ENCODE measurements at regions of chr5 and their contacts with region 1.

Region 1: GRCh38 chr5:138824924-138825863 is 49.9 kb downstream of the LRRTM2 start:
- DNase-seq: peak; percentile 24 to 44 (median 36)
- H3K4me3 ChIP-seq: no peak overlapping the region
- H3K27ac ChIP-seq: no peak overlapping the region
- H3K4me1 ChIP-seq: peaks cover 0 to 6% (median 0%) of the 10 kb centered on the region in 4 experiments
- H3K27me3 ChIP-seq: no peaks in the 10 kb centered on the region

Region 2: DNA sequence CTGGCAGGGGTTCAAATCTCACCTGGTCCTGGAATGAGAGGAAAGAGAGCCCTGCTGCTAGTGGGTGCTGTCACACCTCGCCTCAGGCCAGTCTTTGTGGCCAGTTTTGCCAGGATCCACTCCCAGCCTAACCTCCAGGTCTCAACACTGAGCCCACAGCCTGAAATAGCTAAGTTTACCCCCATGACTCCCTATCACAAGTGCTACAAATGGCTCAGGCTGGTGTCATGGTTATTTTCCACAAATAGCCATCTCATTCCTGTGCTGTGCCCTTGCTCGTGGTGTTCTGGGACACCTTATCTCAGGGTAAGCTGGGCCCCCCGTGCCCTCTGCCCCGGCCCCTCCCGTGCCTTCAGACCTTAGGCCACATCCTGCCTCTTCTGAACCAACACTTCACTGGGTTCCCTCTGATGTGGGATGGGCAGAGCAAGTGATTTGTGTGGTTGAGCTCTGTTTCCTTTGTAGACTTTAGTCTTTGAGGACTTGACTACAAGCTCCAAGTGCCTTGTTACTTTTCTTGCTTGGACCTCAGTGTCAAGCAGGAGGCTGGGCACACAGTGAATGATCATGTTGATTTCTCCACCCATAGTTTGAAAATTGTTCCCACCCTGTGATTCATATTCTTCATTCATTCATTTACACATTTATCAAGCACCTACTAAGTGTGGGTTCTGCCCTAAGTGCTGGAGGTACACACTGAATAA is 156.7 kb before region 1 on chr5:
- CTCF ChIA-PET with region 1: no interaction called
- POLR2A ChIA-PET with region 1: no interaction called
- DNase-seq: peak in 2 of 3 donors; percentile 62 to 65
- H3K4me3 ChIP-seq: no peak overlapping the region
- H3K27ac ChIP-seq: no peak overlapping the region
- H3K4me1 ChIP-seq: peaks cover 0 to 13% (median 8%) of the 10 kb centered on the region in 4 experiments
- H3K27me3 ChIP-seq: peaks cover 5 to 56% (median 25%) of the 10 kb centered on the region in 5 experiments

Region 3: DNA sequence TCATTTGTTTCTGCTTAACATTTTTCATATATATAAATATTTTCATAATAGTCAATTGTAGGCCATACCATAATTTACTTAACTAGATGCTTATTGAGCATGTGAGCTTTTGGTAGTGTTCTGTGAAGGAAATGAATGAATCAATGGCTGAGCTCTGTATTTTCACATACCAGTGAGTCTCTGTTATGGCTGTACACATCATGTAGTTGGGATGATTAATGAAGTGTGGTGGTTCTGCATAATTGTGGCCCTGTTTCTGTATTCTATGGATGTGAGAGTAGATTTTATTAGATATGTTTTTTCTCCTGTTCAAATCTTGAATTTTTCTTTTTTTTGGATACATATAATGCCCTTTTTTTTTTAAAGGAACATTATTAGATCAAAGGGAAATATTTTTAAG is 15.8 kb before region 1 on chr5:
- CTCF ChIA-PET with region 1: interaction called, 26 read pairs
- POLR2A ChIA-PET with region 1: no interaction called
- DNase-seq: no peak
- H3K4me3 ChIP-seq: no peak overlapping the region
- H3K27ac ChIP-seq: no peak overlapping the region
- H3K4me1 ChIP-seq: peaks cover 4 to 10% (median 5%) of the 10 kb centered on the region in 4 experiments
- H3K27me3 ChIP-seq: no peaks in the 10 kb centered on the region

Region 4: GRCh38 chr5:139100825-139101224 is 275.6 kb after region 1 on chr5:
- CTCF ChIA-PET with region 1: no interaction called
- POLR2A ChIA-PET with region 1: no interaction called
- DNase-seq: no peak
- H3K4me3 ChIP-seq: no peak overlapping the region
- H3K27ac ChIP-seq: no peak overlapping the region
- H3K4me1 ChIP-seq: peaks cover 0 to 9% (median 0%) of the 10 kb centered on the region in 4 experiments
- H3K27me3 ChIP-seq: no peaks in the 10 kb centered on the region

Measured in common myeloid progenitor, CD34-positive (primary cell).